MCF 10A (cell line): ENCODE measurements at regions of chr14 and their contacts with region 1.

Region 1: GRCh38 chr14:38867561-38868150 is 235.4 kb downstream of the SEC23A start:
- DNase-seq: peak; percentile 82
- H3K4me3 Mint-ChIP-seq: no peak overlapping the region
- H3K27ac Mint-ChIP-seq: no peak overlapping the region
- H3K4me1 Mint-ChIP-seq: no peaks in the 10 kb centered on the region
- H3K27me3 Mint-ChIP-seq: no peaks in the 10 kb centered on the region
- CTCF ChIP-seq: peak; percentile 61

Region 2: GRCh38 chr14:37709419-37710195 is 1158.0 kb before region 1 on chr14:
- CTCF ChIA-PET with region 1: interaction called, 7 read pairs
- POLR2A ChIA-PET with region 1: no interaction called
- intact Hi-C with region 1: loop called (anchors 1 kb)
- DNase-seq: peak; percentile 33
- H3K4me3 Mint-ChIP-seq: no peak overlapping the region
- H3K27ac Mint-ChIP-seq: no peak overlapping the region
- H3K4me1 Mint-ChIP-seq: no peaks in the 10 kb centered on the region
- H3K27me3 Mint-ChIP-seq: no peaks in the 10 kb centered on the region
- CTCF ChIP-seq: peak; percentile 37

Region 3: DNA sequence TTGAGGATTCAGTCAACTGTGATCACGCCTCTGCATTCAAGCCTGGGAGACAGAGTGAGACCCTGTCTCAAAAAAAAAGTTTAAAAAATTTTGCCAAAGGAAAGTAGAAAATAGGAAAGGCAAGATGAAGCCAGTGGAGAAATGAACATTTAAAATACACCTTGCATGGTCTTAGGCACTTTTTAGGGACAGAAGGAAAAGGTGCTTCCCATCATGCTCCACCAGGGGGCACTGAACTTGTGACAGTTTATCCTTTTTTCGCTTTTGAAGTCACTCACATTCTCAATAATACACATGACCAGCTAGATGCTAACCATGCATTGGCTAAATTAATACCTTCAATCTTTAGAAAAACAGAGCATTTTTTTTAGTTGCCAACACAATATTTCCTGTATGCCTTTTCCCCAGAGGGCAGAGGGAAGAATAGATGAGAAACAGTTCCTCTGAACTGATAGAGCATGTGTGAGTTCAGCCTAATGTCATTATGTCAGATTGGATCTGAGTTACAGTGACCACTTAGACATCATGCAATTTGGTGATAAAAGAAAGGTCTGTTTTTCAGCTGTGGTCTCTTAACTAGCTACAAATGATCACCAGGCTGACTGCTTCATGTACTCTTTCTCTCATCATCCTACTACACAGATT is 881.7 kb before region 1 on chr14:
- CTCF ChIA-PET with region 1: interaction called, 5 read pairs
- POLR2A ChIA-PET with region 1: no interaction called
- intact Hi-C with region 1: loop called (anchors 1 kb)
- DNase-seq: peak; percentile 72
- H3K4me3 Mint-ChIP-seq: no peak overlapping the region
- H3K27ac Mint-ChIP-seq: no peak overlapping the region
- H3K4me1 Mint-ChIP-seq: no peaks in the 10 kb centered on the region
- H3K27me3 Mint-ChIP-seq: no peaks in the 10 kb centered on the region
- CTCF ChIP-seq: peak; percentile 77

Region 4: DNA sequence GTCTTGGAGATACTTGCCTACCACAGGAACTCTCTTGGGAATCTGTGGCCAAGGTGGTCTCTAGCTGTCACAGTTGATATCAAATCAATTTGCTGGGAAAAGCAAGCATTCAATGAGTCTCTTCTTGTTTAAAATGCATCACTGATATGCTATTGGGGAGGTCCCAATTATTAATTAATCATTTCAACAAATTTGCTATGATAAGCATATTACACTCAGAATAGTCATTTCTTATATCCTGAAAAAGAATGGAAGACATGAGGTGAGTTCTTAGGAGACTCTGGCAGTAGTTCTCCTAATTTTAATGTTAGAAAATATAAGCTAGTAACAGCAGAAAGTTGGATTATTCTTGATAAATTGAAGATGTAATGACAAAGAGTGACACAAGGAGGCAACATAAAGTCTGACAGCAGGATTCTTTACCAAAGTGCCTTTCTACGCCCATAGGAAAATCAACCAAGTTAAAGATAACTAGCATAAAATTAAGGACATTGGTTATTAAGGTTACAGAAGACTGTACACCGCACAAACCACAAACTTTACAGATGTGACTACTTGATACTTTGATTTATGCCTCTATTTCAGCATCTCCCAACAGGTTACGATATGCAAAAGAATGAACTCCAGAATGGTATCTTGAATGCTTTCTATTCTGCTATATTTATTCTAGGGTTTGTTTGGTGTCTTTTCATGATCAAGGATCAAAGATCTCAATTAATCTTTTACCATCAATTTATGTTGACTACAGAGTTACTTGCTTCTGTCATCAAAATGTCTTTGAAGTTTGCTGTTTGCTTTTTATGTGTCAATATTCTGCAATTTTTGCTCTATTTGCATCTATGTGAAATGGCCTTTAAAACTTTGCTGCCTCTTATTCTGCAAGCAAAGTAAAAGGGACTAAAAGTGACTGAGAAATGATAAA is 262.2 kb before region 1 on chr14:
- CTCF ChIA-PET with region 1: interaction called, 11 read pairs
- POLR2A ChIA-PET with region 1: no interaction called
- intact Hi-C with region 1: loop called (anchors 1 kb)
- DNase-seq: no peak
- H3K4me3 Mint-ChIP-seq: no peak overlapping the region
- H3K27ac Mint-ChIP-seq: no peak overlapping the region
- H3K4me1 Mint-ChIP-seq: peaks cover 5% of the 10 kb centered on the region
- H3K27me3 Mint-ChIP-seq: no peaks in the 10 kb centered on the region
- CTCF ChIP-seq: peak; percentile 20

Region 5: GRCh38 chr14:38727731-38728130 is 139.9 kb before region 1 on chr14:
- CTCF ChIA-PET with region 1: interaction called, 94 read pairs
- POLR2A ChIA-PET with region 1: no interaction called
- intact Hi-C with region 1: loop called (anchors 1 kb)
- DNase-seq: no peak
- H3K4me3 Mint-ChIP-seq: no peak overlapping the region
- H3K27ac Mint-ChIP-seq: no peak overlapping the region
- H3K4me1 Mint-ChIP-seq: no peaks in the 10 kb centered on the region
- H3K27me3 Mint-ChIP-seq: no peaks in the 10 kb centered on the region
- CTCF ChIP-seq: no peak

Region 6: GRCh38 chr14:39015360-39015961 is 147.8 kb after region 1 on chr14:
- CTCF ChIA-PET with region 1: interaction called, 18 read pairs
- POLR2A ChIA-PET with region 1: no interaction called
- intact Hi-C with region 1: loop called (anchors 2 kb)
- DNase-seq: peak; percentile 66
- H3K4me3 Mint-ChIP-seq: no peak overlapping the region
- H3K27ac Mint-ChIP-seq: no peak overlapping the region
- H3K4me1 Mint-ChIP-seq: peaks cover 12% of the 10 kb centered on the region
- H3K27me3 Mint-ChIP-seq: no peaks in the 10 kb centered on the region
- CTCF ChIP-seq: peak; percentile 66